ENCODE measurements at regions of chr9 and their contacts with region 1.

Region 1: GRCh38 chr9:4740638-4741364 is at the start of gene AK3:
- DNase-seq: peak; percentile 90
- H3K4me3 Mint-ChIP-seq: peak within 1 kb of the TSS; percentile 91
- H3K27ac Mint-ChIP-seq: peak within 1 kb of the TSS; percentile 89
- H3K4me1 Mint-ChIP-seq: peaks cover 55% of the 10 kb centered on the region
- H3K27me3 Mint-ChIP-seq: no peaks in the 10 kb centered on the region
- total RNA-seq, gene AK3: 50.2 to 50.9 TPM

Region 2: DNA sequence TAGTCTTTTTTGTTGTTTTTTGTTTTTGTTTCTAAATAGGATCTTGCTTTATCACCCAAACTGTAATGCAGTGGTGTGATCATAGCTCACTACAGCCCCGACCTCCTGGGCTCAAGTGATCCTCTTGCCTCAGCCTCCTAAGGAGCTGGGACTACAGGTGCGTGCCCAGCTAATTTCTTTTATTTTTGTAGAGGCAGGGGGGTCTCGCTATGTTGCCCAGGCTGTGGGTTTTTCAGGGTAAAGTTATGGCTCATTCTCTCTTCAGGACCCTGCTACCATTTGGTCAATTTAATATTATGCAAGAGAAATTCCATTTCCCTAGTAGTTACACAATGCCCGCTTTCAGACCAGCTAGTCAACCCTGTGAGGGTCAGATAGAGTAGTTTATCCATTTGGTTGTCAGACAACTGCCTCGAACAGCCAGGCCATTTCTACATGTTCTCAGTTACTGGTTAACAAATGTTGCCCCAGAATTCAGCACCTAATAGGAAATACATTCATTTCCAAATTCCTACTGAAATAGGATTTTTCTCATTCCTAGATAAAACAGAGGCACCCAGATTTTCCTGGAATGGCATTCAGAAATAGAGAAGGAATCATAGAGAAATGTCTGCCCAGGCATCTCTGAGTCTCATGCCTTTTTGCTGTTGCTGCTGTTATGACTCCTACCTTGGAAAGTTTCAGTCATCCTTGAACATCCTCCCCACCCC is 434.6 kb before region 1 on chr9:
- CTCF ChIA-PET with region 1: no interaction called
- intact Hi-C with region 1: loop called (anchors 5 kb)
- DNase-seq: peak; percentile 82
- H3K4me3 Mint-ChIP-seq: no peak overlapping the region
- H3K27ac Mint-ChIP-seq: peak overlapping the region; percentile 11
- H3K4me1 Mint-ChIP-seq: peaks cover 55% of the 10 kb centered on the region
- H3K27me3 Mint-ChIP-seq: no peaks in the 10 kb centered on the region

Region 3: GRCh38 chr9:4382722-4383317 is 358.0 kb before region 1 on chr9:
- CTCF ChIA-PET with region 1: interaction called, 3 read pairs
- intact Hi-C with region 1: loop called (anchors 5 kb)
- DNase-seq: peak; percentile 21
- H3K4me3 Mint-ChIP-seq: no peak overlapping the region
- H3K27ac Mint-ChIP-seq: no peak overlapping the region
- H3K4me1 Mint-ChIP-seq: peaks cover 1% of the 10 kb centered on the region
- H3K27me3 Mint-ChIP-seq: no peaks in the 10 kb centered on the region

Region 4: DNA sequence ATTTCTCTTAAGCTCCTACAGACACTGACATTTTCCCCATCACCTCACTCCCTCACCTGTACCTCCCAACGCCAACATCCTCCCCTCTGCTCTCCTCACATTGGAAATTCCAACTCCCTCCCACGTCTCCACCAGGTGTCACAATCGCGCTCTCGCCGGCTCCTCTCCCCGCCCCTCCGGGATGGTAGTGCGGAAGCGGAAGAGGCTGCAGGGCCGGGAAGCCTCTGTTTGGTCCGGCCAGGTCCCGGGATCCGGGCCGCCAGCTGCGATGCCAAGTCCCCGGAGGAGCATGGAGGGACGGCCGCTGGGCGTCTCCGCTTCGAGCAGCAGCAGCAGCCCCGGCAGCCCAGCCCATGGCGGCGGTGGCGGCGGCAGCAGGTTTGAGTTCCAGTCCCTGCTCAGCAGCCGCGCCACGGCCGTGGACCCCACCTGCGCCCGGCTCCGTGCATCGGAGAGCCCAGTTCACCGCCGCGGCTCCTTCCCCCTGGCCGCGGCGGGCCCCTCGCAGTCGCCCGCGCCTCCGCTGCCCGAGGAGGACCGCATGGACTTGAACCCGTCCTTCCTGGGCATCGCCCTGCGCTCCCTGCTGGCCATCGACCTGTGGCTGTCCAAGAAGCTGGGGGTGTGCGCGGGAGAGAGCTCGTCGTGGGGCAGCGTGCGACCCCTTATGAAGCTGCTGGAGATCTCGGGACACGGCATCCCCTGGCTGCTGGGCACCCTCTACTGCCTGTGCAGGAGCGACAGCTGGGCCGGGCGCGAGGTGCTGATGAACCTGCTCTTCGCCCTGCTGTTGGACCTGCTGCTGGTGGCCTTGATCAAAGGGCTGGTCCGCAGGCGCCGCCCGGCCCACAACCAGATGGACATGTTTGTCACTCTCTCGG is 78.5 kb before region 1 on chr9 and contains the start of gene PLPP6:
- CTCF ChIA-PET with region 1: interaction called, 5 read pairs
- intact Hi-C with region 1: loop called (anchors 1 kb)
- DNase-seq: peak; percentile 91
- H3K4me3 Mint-ChIP-seq: peak within 1 kb of the TSS; percentile 87
- H3K27ac Mint-ChIP-seq: peak within 1 kb of the TSS; percentile 77
- H3K4me1 Mint-ChIP-seq: peaks cover 52% of the 10 kb centered on the region
- H3K27me3 Mint-ChIP-seq: no peaks in the 10 kb centered on the region
- total RNA-seq, gene PLPP6: 4.6 to 5.3 TPM

Region 5: DNA sequence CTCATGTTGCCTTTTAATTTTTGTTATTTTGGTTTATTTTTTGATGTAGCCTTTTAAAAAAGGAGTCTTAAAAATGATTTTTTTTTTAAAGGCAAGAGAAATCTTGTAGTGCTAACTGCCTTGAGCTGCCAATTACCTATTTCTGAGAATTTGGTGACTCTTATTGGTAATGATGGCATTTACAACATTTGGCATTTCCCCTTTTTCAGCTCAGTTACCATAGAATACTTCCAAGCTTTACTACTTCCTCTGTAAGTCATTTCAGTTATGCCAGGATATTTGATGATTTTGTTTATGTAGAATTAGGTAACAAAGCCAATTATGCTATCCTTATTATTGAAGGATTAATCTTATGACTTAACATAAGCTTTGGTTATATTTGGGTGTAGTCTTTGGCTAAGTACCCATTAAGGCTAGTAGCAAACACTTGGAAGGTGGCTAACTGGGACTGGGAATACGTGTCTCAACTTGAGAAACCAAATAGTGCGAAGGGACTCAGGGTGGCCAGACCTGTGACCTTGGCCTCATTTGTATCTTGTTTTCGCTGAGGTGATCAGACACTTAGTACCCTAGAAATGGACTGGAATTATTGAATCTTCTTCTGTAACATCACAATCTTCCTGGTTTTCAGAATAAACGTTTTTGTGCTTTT is 33.7 kb before region 1 on chr9:
- CTCF ChIA-PET with region 1: interaction called, 4 read pairs
- intact Hi-C with region 1: loop called (anchors 2 kb)
- DNase-seq: no peak
- H3K4me3 Mint-ChIP-seq: no peak overlapping the region
- H3K27ac Mint-ChIP-seq: no peak overlapping the region
- H3K4me1 Mint-ChIP-seq: peaks cover 25% of the 10 kb centered on the region
- H3K27me3 Mint-ChIP-seq: no peaks in the 10 kb centered on the region